ENCODE measurements at regions of chr14 and their contacts with region 1.

Region 1: GRCh38 chr14:50667996-50668825 is at the start of gene SAV1:
- DNase-seq: peak; percentile 65
- H3K4me3 ChIP-seq: peak within 1 kb of the TSS; percentile 92
- H3K27ac ChIP-seq: peak within 1 kb of the TSS; percentile 40
- H3K4me1 ChIP-seq: peaks cover 22% of the 10 kb centered on the region
- CTCF ChIP-seq: 0 out of 2 replicates have a peak, but pooled peaks have one; percentile 9
- total RNA-seq, gene SAV1: 6.7 and 10.4 TPM in 2 replicates

Region 2: DNA sequence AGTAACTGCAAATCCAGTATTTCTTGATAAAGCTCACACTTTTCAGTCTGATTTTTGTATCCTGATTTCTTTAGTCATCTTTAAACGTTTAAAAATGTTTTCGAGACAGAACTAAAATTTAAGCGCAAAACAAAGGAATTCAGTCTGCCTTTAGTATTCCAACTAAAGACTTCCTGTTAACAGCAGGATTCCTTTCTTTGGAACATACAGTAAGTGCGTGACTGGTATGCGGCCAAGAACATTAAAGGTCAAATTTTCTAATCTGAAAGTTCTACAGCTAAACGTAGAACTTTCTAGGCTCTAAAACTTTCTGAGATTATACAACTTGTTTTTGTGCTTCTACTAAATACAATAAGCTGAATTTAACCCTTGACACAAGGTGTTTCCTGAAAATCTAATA is 10.0 kb before region 1 on chr14:
- CTCF ChIA-PET with region 1: no interaction called
- POLR2A ChIA-PET with region 1: interaction called, 10 read pairs
- intact Hi-C with region 1: no loop called
- DNase-seq: no peak
- H3K4me3 ChIP-seq: no peak overlapping the region
- H3K27ac ChIP-seq: no peak overlapping the region
- H3K4me1 ChIP-seq: no peaks in the 10 kb centered on the region
- CTCF ChIP-seq: no peak

Measured in OCI-LY7 (cell line).